ENCODE measurements at regions of chr17 and their contacts with region 1.

Region 1: DNA sequence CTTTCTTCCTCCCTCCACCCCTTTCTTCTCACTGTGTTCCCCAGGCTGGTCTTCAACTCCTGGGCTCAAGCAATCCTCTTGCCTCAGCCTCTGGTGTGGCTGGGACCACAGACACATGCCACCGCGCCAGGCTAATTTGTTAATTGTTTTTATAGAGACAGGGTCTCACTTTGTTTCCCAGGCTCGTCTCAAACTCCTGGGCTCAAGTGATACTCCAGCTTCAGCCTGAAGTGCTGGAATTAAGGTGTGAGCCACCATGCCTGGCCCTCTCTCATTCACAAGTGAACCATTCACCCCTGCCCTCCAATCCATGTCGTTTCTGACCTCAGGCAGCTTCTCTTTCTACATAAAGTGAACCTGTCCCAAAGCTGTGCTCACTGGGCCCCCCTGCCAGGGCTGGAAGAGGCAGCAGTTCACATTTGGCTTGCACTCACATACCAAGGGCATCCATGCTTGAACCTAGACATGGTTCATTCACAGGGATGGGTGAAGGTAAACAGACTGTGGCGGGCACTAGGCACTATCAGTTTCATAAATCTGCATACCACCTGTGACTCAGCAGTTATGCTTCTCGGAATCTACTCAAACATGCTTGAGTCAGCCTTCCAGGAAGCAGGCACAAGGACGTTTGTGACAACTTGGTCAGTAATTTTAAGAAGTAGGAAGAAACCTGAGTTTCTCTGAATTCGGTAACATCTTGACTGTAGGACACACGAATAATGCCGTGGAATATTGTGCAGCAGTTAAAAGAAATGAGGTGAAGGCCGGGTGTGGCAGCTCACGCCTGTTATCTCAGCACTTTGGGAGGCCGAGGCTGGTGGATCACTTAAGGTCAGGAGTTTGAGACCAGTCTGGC is 6.0 kb upstream of the RNF213 start:
- DNase-seq: peak in 10 of 14 experiments; percentile 20 to 83 (median 49)
- ATAC-seq: peak; percentile 29
- H3K4me3 ChIP-seq: no peak overlapping the region
- H3K4me3 Mint-ChIP-seq: peak overlapping the region; percentile 20
- H3K27ac ChIP-seq: peak overlapping the region in 1 of 2 donors; percentile 37
- H3K27ac Mint-ChIP-seq: peak overlapping the region; percentile 85
- H3K4me1 ChIP-seq: peaks cover 49% of the 10 kb centered on the region
- H3K4me1 Mint-ChIP-seq: peaks cover 29% of the 10 kb centered on the region
- H3K27me3 ChIP-seq: no peaks in the 10 kb centered on the region
- H3K27me3 Mint-ChIP-seq: no peaks in the 10 kb centered on the region
- CTCF ChIP-seq: no peak

Region 2: GRCh38 chr17:80008383-80008840 is 246.2 kb before region 1 on chr17:
- CTCF ChIA-PET with region 1: no interaction called
- POLR2A ChIA-PET with region 1: no interaction called
- intact Hi-C with region 1: loop called in 1 of 2 experiments (anchors 10 kb)
- DNase-seq: peak; percentile 53 to 84 (median 67)
- ATAC-seq: peak; percentile 88
- H3K4me3 ChIP-seq: no peak overlapping the region
- H3K4me3 Mint-ChIP-seq: no peak overlapping the region
- H3K27ac ChIP-seq: no peak overlapping the region
- H3K27ac Mint-ChIP-seq: no peak overlapping the region
- H3K4me1 ChIP-seq: peaks cover 17% of the 10 kb centered on the region
- H3K4me1 Mint-ChIP-seq: peaks cover 8% of the 10 kb centered on the region
- H3K27me3 ChIP-seq: no peaks in the 10 kb centered on the region
- H3K27me3 Mint-ChIP-seq: no peaks in the 10 kb centered on the region
- CTCF ChIP-seq: peak; percentile 81

Region 3: GRCh38 chr17:80082403-80083135 is 172.1 kb before region 1 on chr17:
- CTCF ChIA-PET with region 1: no interaction called
- POLR2A ChIA-PET with region 1: no interaction called
- intact Hi-C with region 1: loop called (anchors 2 kb)
- DNase-seq: peak; percentile 38 to 82 (median 51)
- ATAC-seq: peak; percentile 72
- H3K4me3 ChIP-seq: no peak overlapping the region
- H3K4me3 Mint-ChIP-seq: no peak overlapping the region
- H3K27ac ChIP-seq: no peak overlapping the region
- H3K27ac Mint-ChIP-seq: no peak overlapping the region
- H3K4me1 ChIP-seq: peaks cover 6% of the 10 kb centered on the region
- H3K4me1 Mint-ChIP-seq: peaks cover 6% of the 10 kb centered on the region
- H3K27me3 ChIP-seq: no peaks in the 10 kb centered on the region
- H3K27me3 Mint-ChIP-seq: peaks cover 5% of the 10 kb centered on the region
- CTCF ChIP-seq: peak; percentile 82

Region 4: DNA sequence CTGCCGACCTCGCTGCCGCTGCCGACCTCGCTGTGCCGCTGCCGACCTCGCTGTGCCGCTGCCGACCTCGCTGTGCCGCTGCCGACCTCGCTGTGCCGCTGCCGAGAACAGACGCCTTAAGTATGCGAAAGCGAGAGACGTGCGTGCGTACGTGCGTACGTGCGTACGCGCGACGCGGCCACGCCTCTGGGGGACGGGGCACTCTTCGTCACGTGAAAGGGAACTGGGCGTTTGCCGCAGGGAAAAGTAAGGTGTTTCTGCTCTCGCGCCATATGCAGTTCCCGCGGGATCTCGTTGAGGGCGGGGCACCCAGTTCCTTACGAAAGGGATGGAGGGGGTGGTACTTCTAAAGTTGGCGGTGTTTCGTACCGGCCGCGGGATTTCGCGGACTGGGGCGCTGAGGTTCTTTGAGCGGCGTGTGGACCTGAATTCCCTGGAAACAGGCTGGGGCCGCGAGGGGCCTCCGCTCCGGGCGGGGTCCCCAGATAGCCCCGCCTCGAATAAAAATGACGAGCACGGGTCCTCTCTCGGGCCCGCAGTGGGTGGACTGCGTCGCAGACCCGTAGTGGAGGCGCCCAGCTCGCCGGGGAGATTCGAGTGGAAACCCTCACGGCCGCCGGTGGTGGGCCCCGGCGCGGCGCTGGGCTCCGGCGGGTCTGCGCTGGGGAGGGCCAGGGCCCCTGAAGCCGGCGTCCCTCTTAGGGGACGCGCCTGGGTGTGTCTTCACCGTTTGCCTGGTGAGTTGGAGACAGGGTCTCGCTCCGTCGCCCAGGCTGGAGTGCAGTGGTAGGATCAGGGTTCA is 107.4 kb before region 1 on chr17 and contains the start of gene EIF4A3:
- CTCF ChIA-PET with region 1: no interaction called
- POLR2A ChIA-PET with region 1: no interaction called
- intact Hi-C with region 1: loop called in 1 of 2 experiments (anchors 2 kb)
- DNase-seq: peak; percentile 91 to 100 (median 95)
- ATAC-seq: peak; percentile 90
- H3K4me3 ChIP-seq: peak within 1 kb of the TSS; percentile 95
- H3K4me3 Mint-ChIP-seq: peak within 1 kb of the TSS; percentile 99
- H3K27ac ChIP-seq: peak within 1 kb of the TSS; percentile 84 to 93
- H3K27ac Mint-ChIP-seq: peak within 1 kb of the TSS; percentile 95
- H3K4me1 ChIP-seq: peaks cover 45% of the 10 kb centered on the region
- H3K4me1 Mint-ChIP-seq: peaks cover 49% of the 10 kb centered on the region
- H3K27me3 ChIP-seq: no peaks in the 10 kb centered on the region
- H3K27me3 Mint-ChIP-seq: no peaks in the 10 kb centered on the region
- CTCF ChIP-seq: no peak
- total RNA-seq, gene EIF4A3: 79.6 to 79.7 TPM

Region 5: DNA sequence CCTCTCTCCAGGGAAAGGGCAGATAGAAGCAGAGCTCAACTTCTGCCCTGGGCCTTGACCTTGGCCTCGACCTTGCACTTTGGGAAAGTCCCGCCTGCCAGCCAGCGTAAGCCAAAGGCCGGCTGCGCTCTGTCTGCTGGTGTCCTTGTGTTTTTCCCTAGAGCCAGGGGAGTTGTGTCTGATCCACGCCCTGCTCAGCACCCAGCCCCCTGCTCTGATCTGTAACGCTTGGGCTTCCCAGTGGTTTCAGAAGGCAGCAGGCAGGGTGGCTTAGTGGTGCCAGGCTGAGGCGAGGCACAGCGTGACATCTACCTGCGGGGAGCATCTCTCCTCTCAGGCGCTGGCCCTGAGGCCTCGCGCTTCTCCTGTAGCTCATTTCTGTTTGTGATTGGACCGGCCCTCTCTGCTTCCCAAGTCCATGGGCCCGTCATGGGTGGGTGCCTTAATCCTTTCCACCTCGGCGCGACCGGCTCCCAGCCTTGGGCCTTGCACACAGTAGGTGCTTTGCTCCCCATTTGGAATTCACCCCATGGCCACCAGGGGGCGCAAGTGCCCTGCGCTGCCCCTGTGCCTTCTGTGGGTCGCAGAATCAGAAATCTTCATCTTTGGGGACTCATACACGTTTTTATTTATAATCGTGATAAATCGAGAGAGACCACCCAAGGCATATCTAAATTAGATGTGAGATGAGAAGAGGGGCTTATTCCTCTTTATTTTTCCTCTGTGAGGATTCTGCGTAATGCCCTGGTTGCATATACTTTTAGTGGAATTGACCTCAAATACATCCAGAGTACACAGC is 58.7 kb before region 1 on chr17:
- CTCF ChIA-PET with region 1: interaction called, 14 read pairs
- POLR2A ChIA-PET with region 1: no interaction called
- intact Hi-C with region 1: loop called (anchors 1 kb)
- DNase-seq: peak; percentile 29 to 79 (median 59)
- ATAC-seq: peak; percentile 56
- H3K4me3 ChIP-seq: no peak overlapping the region
- H3K4me3 Mint-ChIP-seq: no peak overlapping the region
- H3K27ac ChIP-seq: no peak overlapping the region
- H3K27ac Mint-ChIP-seq: no peak overlapping the region
- H3K4me1 ChIP-seq: peaks cover 4% of the 10 kb centered on the region
- H3K4me1 Mint-ChIP-seq: no peaks in the 10 kb centered on the region
- H3K27me3 ChIP-seq: no peaks in the 10 kb centered on the region
- H3K27me3 Mint-ChIP-seq: peaks cover 8% of the 10 kb centered on the region
- CTCF ChIP-seq: peak; percentile 99

Region 6: DNA sequence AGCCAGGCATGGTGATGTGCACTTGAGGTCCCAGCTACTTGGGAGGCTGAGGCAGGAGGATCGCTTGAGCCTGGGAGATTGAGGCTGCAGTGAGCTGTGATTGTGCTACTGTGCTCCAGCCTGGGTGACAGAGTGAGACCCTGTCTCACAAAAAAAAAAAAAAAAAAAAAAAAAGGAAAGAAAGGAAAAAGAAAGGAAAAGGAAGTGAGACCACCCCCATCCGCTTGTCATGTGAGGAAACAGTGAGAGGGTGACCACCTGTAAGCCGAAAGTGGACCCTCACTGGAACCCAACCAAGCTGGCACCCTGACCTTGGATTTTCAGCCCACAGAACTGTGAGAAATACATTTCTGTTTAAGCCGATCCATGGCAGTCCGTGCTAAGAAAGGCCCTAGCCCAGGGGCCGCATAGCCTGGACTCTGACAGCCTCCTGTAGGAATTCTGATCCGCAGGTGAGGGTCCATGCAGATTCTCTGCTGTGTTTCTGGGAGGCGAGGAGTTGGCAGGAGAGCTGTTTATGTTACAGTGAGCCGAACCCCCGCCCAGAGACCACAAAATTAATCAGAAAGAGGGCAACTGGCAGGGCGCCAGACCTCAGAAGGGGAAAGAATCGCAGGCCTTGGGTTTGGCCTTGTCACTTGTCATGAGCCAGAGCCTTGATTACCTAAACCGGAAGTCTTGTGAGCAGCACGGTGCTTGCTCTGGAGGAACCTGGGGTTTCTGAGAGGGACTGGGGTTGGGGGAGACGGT is 35.4 kb before region 1 on chr17:
- CTCF ChIA-PET with region 1: interaction called, 3 read pairs
- POLR2A ChIA-PET with region 1: interaction called, 3 read pairs
- intact Hi-C with region 1: loop called (anchors 2 kb)
- DNase-seq: peak; percentile 86 to 97 (median 93)
- ATAC-seq: peak; percentile 90
- H3K4me3 ChIP-seq: peak overlapping the region; percentile 99
- H3K4me3 Mint-ChIP-seq: peak overlapping the region; percentile 95
- H3K27ac ChIP-seq: peak overlapping the region; percentile 89 to 93
- H3K27ac Mint-ChIP-seq: peak overlapping the region; percentile 93
- H3K4me1 ChIP-seq: peaks cover 45% of the 10 kb centered on the region
- H3K4me1 Mint-ChIP-seq: peaks cover 43% of the 10 kb centered on the region
- H3K27me3 ChIP-seq: no peaks in the 10 kb centered on the region
- H3K27me3 Mint-ChIP-seq: no peaks in the 10 kb centered on the region
- CTCF ChIP-seq: no peak

Measured in CD4-positive, alpha-beta T cell (primary cell).